A673 (cell line): ENCODE measurements at regions of chr2 and their contacts with region 1.

Region 1: DNA sequence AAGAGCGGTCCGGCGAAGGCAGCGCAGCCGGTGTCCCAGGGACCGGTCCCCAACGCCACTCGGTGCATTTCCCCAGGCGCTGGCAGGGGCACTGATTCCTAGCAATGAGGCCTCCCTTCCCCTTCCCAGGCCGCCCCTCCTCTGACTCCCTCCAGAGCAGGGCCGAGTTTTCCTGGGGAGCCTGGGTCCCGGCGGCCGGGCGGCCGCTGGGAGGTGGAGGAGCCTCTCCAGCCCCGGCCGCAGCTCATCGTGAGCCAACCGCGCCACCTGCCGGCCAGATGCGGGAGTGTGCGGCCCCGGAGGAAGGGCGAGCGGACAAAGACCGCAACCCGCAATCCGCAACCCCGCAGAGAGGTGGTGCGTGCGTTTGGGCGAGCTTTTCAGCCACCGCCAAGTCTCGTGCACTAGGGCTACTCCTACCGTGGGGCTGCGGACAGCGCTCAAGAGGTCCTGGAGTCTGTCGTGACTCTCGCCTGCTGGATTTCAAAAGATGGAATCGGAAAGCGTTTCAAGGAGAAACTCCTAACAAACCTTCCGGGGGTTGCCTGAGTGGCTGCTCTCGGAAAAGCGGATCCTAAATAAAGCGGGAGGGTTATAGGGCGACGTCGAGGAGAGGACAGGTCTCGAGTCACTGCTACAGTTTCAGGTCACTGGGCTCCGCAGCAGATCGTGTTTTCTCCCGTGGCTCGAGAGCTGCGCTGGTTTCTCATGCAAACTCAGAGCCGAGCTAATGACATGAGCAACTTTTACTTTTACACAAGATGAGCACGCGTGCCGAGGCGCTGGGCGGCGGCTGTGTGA is 1.5 kb upstream of the EPHA4 start:
- DNase-seq: peak; percentile 91
- H3K4me3 ChIP-seq: peak overlapping the region; percentile 84
- H3K27ac ChIP-seq: peak overlapping the region; percentile 85
- H3K4me1 ChIP-seq: peaks cover 18% of the 10 kb centered on the region
- H3K27me3 ChIP-seq: peaks cover 4% of the 10 kb centered on the region
- CTCF ChIP-seq: peak; percentile 98

Region 2: DNA sequence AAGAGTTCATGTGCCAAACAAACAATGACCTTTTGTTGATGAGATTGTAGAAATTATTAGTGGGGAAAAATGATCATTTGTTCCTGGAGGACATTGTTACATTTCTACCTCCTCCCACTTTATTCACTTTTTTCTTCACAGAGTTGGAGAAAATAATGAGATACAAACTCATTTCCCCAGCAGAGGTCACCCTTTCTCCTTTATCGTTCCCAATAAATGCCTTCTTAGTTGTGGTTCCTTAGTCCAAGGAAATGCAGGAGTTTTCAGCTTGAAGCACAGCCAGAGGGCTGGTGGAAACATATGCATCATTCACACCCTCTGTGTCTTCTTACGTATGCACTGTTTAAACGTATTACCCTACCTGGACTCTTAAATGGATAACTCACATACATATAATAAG is 1837.4 kb before region 1 on chr2:
- CTCF ChIA-PET with region 1: no interaction called
- POLR2A ChIA-PET with region 1: no interaction called
- intact Hi-C with region 1: loop called (anchors 2 kb)
- DNase-seq: peak; percentile 91
- H3K4me3 ChIP-seq: no peak overlapping the region
- H3K27ac ChIP-seq: no peak overlapping the region
- H3K4me1 ChIP-seq: peaks cover 19% of the 10 kb centered on the region
- H3K27me3 ChIP-seq: no peaks in the 10 kb centered on the region
- CTCF ChIP-seq: peak; percentile 64

Region 3: DNA sequence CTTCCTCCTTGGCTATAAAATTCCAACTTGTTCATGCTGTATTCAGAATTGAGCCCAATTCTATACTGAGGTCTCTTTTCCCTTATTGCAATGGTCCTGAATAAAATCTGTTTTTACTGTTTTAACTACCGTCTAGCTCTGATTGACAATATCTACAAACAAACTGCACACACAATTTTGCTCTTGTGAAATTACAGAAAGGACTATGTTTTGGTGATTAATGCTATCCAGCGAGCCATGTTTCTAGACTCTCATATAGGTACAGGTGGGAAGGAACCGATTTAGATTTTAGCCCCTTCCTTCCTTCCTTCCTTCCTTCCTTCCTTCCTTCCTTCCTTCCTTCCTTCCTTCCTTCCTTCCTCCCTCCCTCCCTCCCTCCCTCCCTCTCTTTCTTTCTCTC is 1691.8 kb before region 1 on chr2:
- CTCF ChIA-PET with region 1: no interaction called
- POLR2A ChIA-PET with region 1: interaction called, 18 read pairs
- intact Hi-C with region 1: no loop called
- DNase-seq: peak; percentile 64
- H3K4me3 ChIP-seq: no peak overlapping the region
- H3K27ac ChIP-seq: peak overlapping the region; percentile 35
- H3K4me1 ChIP-seq: peaks cover 13% of the 10 kb centered on the region
- H3K27me3 ChIP-seq: no peaks in the 10 kb centered on the region
- CTCF ChIP-seq: no peak

Region 4: DNA sequence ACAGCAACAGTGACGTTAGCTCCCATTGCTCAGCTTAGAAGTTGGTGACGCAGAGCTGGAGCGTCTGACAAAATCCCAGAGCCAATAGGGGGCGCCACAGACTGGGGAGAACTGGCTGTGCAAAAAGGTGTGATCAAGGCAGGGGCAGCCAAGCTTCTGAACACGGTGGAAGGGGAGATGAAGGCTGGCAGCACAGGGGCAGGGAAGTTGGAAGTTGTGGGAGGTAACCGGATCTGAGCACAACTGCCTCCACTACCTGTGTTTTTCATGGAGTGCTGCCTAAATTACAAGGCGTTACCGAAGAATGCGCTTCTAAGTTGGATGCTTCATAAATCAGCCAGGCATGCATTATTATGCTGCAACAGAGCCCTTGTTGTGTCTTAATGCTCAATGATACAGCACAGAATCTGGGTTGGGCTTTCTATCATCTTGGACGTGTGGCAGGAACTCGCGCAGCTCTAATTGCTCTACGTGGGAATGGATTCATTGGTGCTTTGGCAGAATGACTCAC is 1576.2 kb before region 1 on chr2:
- CTCF ChIA-PET with region 1: interaction called, 3 read pairs
- POLR2A ChIA-PET with region 1: no interaction called
- intact Hi-C with region 1: loop called (anchors 5 kb)
- DNase-seq: peak; percentile 89
- H3K4me3 ChIP-seq: no peak overlapping the region
- H3K27ac ChIP-seq: peak overlapping the region; percentile 22
- H3K4me1 ChIP-seq: peaks cover 31% of the 10 kb centered on the region
- H3K27me3 ChIP-seq: no peaks in the 10 kb centered on the region
- CTCF ChIP-seq: peak; percentile 88

Region 5: DNA sequence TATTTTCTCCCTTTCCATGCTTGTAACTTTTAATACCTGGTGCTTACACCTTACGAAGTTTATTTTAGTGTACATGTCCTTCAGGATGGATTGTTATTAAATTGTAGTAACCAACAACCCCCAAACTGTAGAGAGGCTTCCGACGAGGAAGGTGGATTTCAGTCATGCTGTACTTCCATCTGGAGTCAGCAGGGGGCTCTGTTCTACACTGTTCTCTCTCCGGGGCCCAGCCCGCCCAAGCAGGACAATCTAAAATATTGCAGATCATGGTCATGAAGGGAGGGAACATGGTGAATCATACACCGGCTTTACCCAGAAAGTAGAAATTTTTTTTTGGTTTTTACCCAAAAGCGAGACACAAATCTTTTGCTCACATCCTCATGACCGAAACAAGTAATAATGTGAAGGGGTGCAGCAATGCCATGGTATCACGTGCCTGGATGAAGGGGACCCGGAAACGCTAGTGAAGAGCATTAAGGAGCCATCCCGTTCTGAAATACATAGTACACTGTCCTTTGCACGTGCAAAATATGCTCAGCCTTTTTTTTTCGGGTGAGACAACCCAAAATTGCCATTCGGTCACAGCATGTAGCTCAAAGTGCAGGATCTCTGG is 886.3 kb before region 1 on chr2:
- CTCF ChIA-PET with region 1: no interaction called
- POLR2A ChIA-PET with region 1: no interaction called
- intact Hi-C with region 1: loop called (anchors 2 kb)
- DNase-seq: peak; percentile 82
- H3K4me3 ChIP-seq: no peak overlapping the region
- H3K27ac ChIP-seq: no peak overlapping the region
- H3K4me1 ChIP-seq: peaks cover 22% of the 10 kb centered on the region
- H3K27me3 ChIP-seq: no peaks in the 10 kb centered on the region
- CTCF ChIP-seq: peak; percentile 88

Region 6: DNA sequence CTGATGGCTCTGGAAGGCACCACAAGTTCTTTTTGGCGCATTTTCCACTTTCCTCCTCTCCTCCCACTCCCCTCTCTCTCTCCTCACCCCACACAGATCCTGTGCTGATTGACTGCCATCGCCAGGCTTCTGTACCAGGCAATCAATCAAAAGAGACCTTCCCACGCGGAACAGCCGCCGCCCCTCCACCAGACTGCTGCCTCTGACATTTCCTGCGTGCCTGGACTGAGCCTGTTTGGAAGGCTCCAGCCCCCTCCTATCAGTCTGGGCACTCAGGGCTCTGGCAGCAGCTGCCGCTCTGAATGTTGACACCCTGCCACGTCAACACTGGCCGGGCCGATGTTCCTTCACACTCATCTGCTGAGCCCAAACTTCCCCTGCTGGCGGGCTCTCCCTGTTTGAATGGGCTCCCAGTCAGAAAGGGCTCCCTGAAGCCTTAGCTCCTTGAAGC is 469.2 kb before region 1 on chr2:
- CTCF ChIA-PET with region 1: no interaction called
- POLR2A ChIA-PET with region 1: no interaction called
- intact Hi-C with region 1: loop called (anchors 10 kb)
- DNase-seq: peak; percentile 38
- H3K4me3 ChIP-seq: no peak overlapping the region
- H3K27ac ChIP-seq: no peak overlapping the region
- H3K4me1 ChIP-seq: peaks cover 14% of the 10 kb centered on the region
- H3K27me3 ChIP-seq: no peaks in the 10 kb centered on the region
- CTCF ChIP-seq: no peak

Region 7: DNA sequence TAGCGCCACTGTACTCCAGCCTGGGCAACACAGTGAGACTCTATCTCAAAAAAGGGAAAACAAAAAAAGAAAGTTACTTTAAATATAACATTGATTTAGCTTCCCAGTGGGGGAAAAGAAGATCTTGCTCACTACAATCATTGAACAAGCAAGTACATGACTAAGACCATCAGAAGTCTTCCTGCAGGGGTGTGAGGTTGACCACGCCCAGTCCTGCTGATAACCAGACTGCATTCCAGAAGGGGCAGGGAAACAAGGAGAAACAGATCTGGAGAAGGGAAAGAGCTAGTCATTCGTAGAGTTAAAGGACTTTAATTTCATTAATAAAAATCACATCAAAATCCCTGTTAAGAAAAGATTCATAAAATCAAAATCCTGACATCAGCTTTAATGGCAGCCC is 79.1 kb before region 1 on chr2:
- CTCF ChIA-PET with region 1: no interaction called
- POLR2A ChIA-PET with region 1: no interaction called
- intact Hi-C with region 1: no loop called
- DNase-seq: no peak
- H3K4me3 ChIP-seq: no peak overlapping the region
- H3K27ac ChIP-seq: no peak overlapping the region
- H3K4me1 ChIP-seq: no peaks in the 10 kb centered on the region
- H3K27me3 ChIP-seq: no peaks in the 10 kb centered on the region
- CTCF ChIP-seq: no peak

Region 8: GRCh38 chr2:221969087-221969829 is 395.6 kb after region 1 on chr2:
- CTCF ChIA-PET with region 1: no interaction called
- POLR2A ChIA-PET with region 1: no interaction called
- intact Hi-C with region 1: loop called (anchors 1 kb)
- DNase-seq: peak; percentile 65
- H3K4me3 ChIP-seq: no peak overlapping the region
- H3K27ac ChIP-seq: no peak overlapping the region
- H3K4me1 ChIP-seq: no peaks in the 10 kb centered on the region
- H3K27me3 ChIP-seq: no peaks in the 10 kb centered on the region
- CTCF ChIP-seq: peak; percentile 84